ENCODE measurements at regions of chr20 and their contacts with region 1.

Region 1: GRCh38 chr20:45771182-45771759 is 20.4 kb downstream of the WFDC3 start:
- DNase-seq: peak; percentile 15 to 67
- ATAC-seq: peak; percentile 87 to 90
- H3K4me3 ChIP-seq: no peak overlapping the region
- H3K27ac ChIP-seq: peak overlapping the region; percentile 34 to 54 (median 44)
- H3K4me1 ChIP-seq: peaks cover 4 to 7% of the 10 kb centered on the region in 2 donors
- H3K27me3 ChIP-seq: no peaks in the 10 kb centered on the region
- CTCF ChIP-seq: peak; percentile 88 to 94 (median 91)
- POLR2A ChIP-seq: no peak

Region 2: GRCh38 chr20:45011108-45011526 is 760.2 kb before region 1 on chr20:
- in situ Hi-C with region 1: loop called in 1 of 4 experiments (anchors 25 kb)
- intact Hi-C with region 1: no loop called
- DNase-seq: peak; percentile 22
- ATAC-seq: peak; percentile 70 to 76
- H3K4me3 ChIP-seq: no peak overlapping the region
- H3K27ac ChIP-seq: no peak overlapping the region
- H3K4me1 ChIP-seq: peaks cover 3% of the 10 kb centered on the region in 2 donors
- H3K27me3 ChIP-seq: no peaks in the 10 kb centered on the region
- CTCF ChIP-seq: peak; percentile 14 to 71 (median 51)
- POLR2A ChIP-seq: no peak

Region 3: DNA sequence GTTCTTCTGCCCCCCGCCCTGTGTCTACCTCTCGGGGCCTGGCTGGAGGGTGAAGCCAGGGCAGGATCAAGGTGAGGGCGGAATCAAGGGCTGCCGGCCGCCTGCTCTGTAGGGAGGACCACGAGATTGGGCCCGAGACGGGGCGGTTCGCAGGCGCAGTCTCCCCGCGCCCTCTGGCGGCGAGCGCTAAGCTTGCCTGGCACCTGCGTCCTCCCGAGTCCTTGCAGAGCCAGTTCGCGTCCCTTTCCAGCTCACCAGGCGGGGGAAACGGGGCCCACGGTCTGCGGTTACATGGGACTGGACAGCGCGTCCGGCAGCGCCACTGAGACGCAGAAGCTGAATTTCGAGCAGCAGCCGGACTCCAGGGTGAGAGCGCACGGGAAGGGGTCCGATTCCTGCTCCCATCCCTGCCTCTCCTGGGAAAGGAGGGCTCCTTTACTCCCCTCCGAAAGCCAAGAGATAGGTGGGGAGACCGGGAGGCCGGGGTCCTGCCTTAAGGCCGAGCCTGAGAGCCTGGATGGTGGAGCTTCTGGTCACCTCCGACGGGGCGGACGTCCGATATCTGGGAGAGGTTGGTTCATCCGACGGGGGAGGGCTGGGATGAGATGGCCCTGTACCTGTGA is 459.6 kb before region 1 on chr20:
- in situ Hi-C with region 1: loop called in 2 of 4 experiments (anchors 5 to 10 kb)
- intact Hi-C with region 1: no loop called
- DNase-seq: no peak
- ATAC-seq: no peak
- H3K4me3 ChIP-seq: no peak overlapping the region
- H3K27ac ChIP-seq: no peak overlapping the region
- H3K4me1 ChIP-seq: peaks cover 0 to 5% of the 10 kb centered on the region in 2 donors
- H3K27me3 ChIP-seq: peaks cover 6 to 20% (median 13%) of the 10 kb centered on the region in 3 donors
- CTCF ChIP-seq: peak; percentile 35 to 82 (median 69)
- POLR2A ChIP-seq: no peak

Region 4: DNA sequence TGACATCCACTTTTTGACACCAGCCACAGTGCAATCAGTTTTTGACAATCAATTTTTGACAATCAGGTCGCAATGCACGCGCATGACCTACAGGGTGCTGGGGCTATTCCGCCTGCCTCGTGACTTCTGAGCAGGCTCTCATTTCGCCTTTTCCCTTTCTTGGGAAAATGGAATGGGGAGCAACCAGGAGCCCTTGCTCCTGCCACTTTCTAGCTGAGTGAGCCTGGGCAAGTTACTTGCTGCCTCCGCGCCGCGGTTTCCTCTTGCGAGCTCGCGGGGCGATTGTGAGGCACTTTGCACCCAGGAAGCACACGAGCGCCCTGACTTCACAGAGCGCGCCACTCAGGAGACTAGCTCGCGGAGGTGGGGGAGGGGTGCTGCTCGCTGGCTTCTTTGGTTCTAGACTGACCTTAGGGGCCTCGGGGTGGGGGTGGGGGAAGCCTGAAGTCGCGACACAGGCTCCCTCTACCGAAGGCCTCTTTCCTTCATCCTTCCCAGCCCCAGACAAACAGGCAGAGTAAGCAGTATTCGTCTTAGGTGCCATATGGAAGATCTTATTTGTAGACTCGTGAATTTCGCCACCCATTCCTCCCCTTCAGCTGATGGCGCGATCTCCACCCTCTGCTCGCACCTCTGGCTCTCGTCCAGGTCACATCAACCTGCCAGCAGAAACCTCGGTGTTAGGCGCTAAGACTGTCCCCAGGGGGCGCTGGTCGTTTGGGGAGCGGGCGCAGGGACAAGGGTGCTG is 397.7 kb before region 1 on chr20:
- in situ Hi-C with region 1: no loop called
- intact Hi-C with region 1: loop called (anchors 5 kb)
- DNase-seq: peak; percentile 69 to 79
- ATAC-seq: peak; percentile 82 to 86
- H3K4me3 ChIP-seq: peak overlapping the region; percentile 63 to 70 (median 64)
- H3K27ac ChIP-seq: peak overlapping the region; percentile 79 to 83 (median 80)
- H3K4me1 ChIP-seq: peaks cover 6 to 12% of the 10 kb centered on the region in 2 donors
- H3K27me3 ChIP-seq: no peaks in the 10 kb centered on the region
- CTCF ChIP-seq: peak; percentile 85 to 91 (median 88)
- POLR2A ChIP-seq: no peak

Region 5: GRCh38 chr20:45436732-45437391 is 334.4 kb before region 1 on chr20:
- in situ Hi-C with region 1: loop called (anchors 10 to 25 kb)
- intact Hi-C with region 1: loop called (anchors 5 kb)
- DNase-seq: peak; percentile 64 to 87
- ATAC-seq: peak; percentile 94 to 96
- H3K4me3 ChIP-seq: peak overlapping the region; percentile 60 to 82 (median 74)
- H3K27ac ChIP-seq: peak overlapping the region; percentile 81 to 86 (median 84)
- H3K4me1 ChIP-seq: peaks cover 4 to 6% of the 10 kb centered on the region in 2 donors
- H3K27me3 ChIP-seq: no peaks in the 10 kb centered on the region
- CTCF ChIP-seq: peak; percentile 94 to 98 (median 97)
- POLR2A ChIP-seq: no peak

Region 6: DNA sequence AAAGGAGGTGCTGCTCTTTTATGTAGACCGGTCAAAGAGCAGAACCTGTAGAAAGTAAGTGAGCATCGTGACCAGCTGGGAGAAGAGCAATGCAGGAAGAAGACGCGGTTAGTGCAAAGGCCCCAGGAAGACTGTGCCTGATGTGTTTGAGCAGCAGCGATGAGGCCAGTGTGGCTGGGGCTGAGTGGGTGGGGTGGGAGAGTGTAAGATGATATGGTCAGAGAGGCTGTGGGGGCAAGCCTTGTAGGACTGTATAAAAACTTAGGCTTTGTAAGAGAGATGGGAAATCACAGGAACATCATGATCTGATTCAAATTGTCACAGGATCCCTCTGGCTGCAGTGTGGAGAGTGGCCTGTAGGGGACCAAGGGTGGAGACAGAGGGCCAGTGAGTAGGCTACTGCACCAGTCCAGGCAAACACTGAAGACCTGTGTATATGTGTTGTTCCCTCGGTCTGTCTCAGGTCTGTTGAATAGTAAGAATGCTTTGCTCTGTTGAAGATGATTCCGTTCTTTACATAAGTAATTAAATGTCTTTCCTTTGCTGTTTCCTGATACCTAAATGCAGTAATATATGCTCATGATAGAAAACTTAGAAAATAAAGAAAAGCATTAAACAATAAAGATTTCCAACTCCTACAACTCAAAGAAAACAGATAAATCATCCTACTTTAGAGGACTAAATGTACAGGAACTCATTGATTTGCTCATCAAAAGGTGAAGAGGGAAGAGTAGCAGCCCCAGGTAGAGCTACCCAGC is 325.3 kb before region 1 on chr20:
- in situ Hi-C with region 1: loop called in 3 of 4 experiments (anchors 10 to 25 kb)
- intact Hi-C with region 1: no loop called
- DNase-seq: no peak
- ATAC-seq: no peak
- H3K4me3 ChIP-seq: no peak overlapping the region
- H3K27ac ChIP-seq: no peak overlapping the region
- H3K4me1 ChIP-seq: peaks cover 0 to 15% of the 10 kb centered on the region in 2 donors
- H3K27me3 ChIP-seq: peaks cover 0 to 3% (median 0%) of the 10 kb centered on the region in 3 donors
- CTCF ChIP-seq: peak in 1 of 5 experiments; percentile 38
- POLR2A ChIP-seq: no peak

Region 7: GRCh38 chr20:45545754-45546453 is 225.4 kb before region 1 on chr20:
- in situ Hi-C with region 1: loop called in 1 of 4 experiments (anchors 25 kb)
- intact Hi-C with region 1: no loop called
- DNase-seq: no peak
- ATAC-seq: no peak
- H3K4me3 ChIP-seq: no peak overlapping the region
- H3K27ac ChIP-seq: no peak overlapping the region
- H3K4me1 ChIP-seq: no peaks in the 10 kb centered on the region
- H3K27me3 ChIP-seq: no peaks in the 10 kb centered on the region
- CTCF ChIP-seq: no peak
- POLR2A ChIP-seq: no peak

Region 8: DNA sequence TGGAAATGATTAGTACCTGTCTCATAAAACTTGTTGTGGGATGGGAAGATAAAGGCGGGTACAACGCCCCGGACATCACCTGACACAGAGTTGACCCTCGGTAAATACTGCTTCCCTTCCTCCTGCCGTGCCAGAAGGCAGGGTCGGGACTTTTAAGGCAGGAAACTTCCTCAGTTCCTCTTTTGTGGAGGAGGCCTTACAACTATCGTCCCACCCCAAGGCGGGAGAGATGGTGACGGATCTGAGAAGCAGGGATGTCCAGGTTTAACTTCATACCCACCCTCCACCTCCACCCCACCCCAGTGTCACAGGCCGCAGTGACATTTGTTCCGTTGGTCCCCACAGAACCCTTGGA is 21.0 kb after region 1 on chr20:
- in situ Hi-C with region 1: no loop called
- intact Hi-C with region 1: no loop called
- DNase-seq: no peak
- ATAC-seq: no peak
- H3K4me3 ChIP-seq: peak overlapping the region; percentile 82 to 100 (median 97)
- H3K27ac ChIP-seq: peak overlapping the region; percentile 94 to 100 (median 97)
- H3K4me1 ChIP-seq: peaks cover 21 to 33% of the 10 kb centered on the region in 2 donors
- H3K27me3 ChIP-seq: no peaks in the 10 kb centered on the region
- CTCF ChIP-seq: no peak
- POLR2A ChIP-seq: no peak

Region 9: GRCh38 chr20:45857114-45857881 is 86.0 kb after region 1 on chr20 and contains the starts of genes ACOT8 and ZSWIM3:
- in situ Hi-C with region 1: no loop called
- intact Hi-C with region 1: no loop called
- DNase-seq: peak; percentile 98 to 99
- ATAC-seq: peak; percentile 99 to 100
- H3K4me3 ChIP-seq: peak within 1 kb of the TSS; percentile 83 to 88 (median 86)
- H3K27ac ChIP-seq: peak within 1 kb of the TSS; percentile 82 to 93 (median 87)
- H3K4me1 ChIP-seq: peaks cover 38 to 39% of the 10 kb centered on the region in 2 donors
- H3K27me3 ChIP-seq: no peaks in the 10 kb centered on the region
- CTCF ChIP-seq: no peak
- POLR2A ChIP-seq: peak; percentile 69 to 76
- total RNA-seq, gene ACOT8: 32.3 to 66.2 (median 41.4) TPM
- total RNA-seq, gene ZSWIM3: 1.3 to 3.3 (median 2.1) TPM

Measured in gastrocnemius medialis (tissue), 4 donors.